ENCODE measurements at regions of chr13 and their contacts with region 1.

Region 1: DNA sequence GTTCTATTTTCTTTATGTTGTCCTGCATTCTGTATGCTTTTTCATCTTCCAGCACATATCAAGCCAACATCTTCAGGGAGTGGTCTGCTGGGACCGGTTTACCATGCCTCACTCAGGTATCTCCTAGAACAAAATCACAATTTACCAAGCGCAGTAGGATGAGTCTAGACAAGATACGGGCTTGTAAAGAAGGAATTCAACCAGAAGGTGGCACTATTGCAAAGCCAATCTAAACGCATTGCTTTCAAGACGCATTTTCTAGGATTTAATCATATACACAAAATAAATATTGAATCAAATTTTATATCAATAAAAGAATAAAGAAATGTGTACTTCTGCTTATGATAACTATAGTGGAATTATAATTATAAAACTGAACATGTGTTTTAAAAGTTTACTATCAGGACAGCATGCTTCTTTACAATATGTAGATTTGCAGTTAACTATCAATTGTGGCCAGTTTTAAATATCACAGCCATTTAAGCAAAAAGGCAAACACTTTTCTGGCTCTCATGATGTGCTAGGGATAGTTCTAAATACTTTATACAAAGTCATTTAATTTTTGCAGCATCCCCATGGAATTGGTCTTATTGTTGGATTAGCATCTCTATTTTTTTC is 16.1 kb upstream of the TPP2 start:
- DNase-seq: peak in 3 of 5 donors; percentile 35 to 83 (median 73)
- H3K4me3 ChIP-seq: no peak overlapping the region
- H3K27ac ChIP-seq: no peak overlapping the region
- H3K4me1 ChIP-seq: no peaks in the 10 kb centered on the region
- H3K27me3 ChIP-seq: no peaks in the 10 kb centered on the region
- CTCF ChIP-seq: peak; percentile 79

Region 2: DNA sequence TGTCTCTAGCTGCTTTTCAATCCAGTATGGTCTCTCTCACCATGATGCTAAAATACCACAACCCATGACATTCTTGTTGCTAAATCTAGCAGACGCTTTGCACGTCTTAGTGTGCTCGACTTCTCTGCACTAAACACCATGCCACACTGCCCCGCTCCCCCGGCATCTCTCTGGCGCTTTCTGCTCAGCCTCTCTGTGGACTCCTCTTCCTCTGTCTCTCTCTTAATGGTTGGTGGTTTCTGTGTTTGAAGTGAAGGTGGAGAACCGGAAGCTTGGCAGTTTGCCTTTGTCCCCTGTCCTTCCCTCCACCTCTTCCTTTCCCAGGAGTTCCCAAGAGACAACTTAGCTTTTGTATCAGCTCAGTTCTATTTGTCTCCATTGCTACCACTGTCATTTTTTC is 274.0 kb after region 1 on chr13:
- intact Hi-C with region 1: loop called (anchors 10 kb)
- DNase-seq: no peak
- H3K4me3 ChIP-seq: no peak overlapping the region
- H3K27ac ChIP-seq: no peak overlapping the region
- H3K4me1 ChIP-seq: no peaks in the 10 kb centered on the region
- H3K27me3 ChIP-seq: no peaks in the 10 kb centered on the region
- CTCF ChIP-seq: no peak